ENCODE measurements at regions of chr4 and their contacts with region 1.

Region 1: GRCh38 chr4:87339440-87339839 is 16.8 kb upstream of the HSD17B13 start:
- DNase-seq: no peak
- H3K4me3 ChIP-seq: no peak overlapping the region
- CTCF ChIP-seq: no peak

Region 2: GRCh38 chr4:87166296-87166854 is 173.1 kb before region 1 on chr4:
- CTCF ChIA-PET with region 1: no interaction called
- POLR2A ChIA-PET with region 1: no interaction called
- DNase-seq: no peak
- H3K4me3 ChIP-seq: no peak overlapping the region
- CTCF ChIP-seq: no peak

Region 3: GRCh38 chr4:87353592-87353991 is 14.2 kb after region 1 on chr4:
- CTCF ChIA-PET with region 1: interaction called, 23 read pairs
- POLR2A ChIA-PET with region 1: no interaction called
- DNase-seq: no peak
- H3K4me3 ChIP-seq: no peak overlapping the region
- CTCF ChIP-seq: peak; percentile 46

Measured in AG04449 (cell line).